Calu3 (cell line): ENCODE measurements at regions of chr15 and their contacts with region 1.

Region 1: DNA sequence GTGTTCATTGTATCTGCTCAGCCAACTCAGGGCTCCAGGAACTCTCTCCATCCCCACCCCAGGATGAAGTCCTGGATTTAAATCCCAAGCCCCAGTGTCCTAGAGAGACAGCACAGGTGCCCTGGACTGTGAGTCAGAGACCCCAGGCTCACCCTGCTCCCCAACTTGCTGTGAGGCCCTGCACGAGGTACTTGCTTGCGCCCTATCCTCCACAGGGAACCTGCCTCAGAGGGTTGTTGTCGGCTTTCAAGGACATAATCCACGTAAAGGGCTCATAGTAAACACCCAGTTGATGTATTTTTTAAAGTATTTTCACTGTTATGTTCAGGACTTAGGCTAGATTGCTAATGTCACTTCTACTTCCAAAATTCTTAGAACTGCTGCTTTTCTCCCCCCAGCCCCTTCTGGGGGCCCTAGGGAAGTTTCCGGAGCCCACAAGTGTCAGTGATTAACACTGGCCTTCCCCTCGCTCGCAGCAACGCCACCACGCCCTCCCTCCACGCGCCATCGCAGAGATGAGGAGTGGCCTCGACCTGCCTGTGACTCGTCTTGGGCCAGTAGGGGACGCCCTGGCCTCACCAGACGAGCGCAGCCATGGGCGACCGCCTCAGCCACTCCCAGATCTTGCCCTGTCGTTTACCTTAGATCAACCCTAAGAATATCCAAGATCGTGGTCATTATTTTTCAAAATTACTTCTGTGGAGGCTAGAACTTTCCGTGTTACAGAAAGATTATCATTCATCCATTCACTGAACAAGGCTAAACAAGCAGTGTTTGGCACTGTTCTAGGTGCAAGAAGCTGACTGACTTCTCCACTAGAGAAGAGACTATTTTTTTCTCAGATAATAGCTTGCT is 6.0 kb upstream of the SRP14 start:
- DNase-seq: peak; percentile 82
- H3K4me3 Mint-ChIP-seq: no peak overlapping the region
- H3K27ac Mint-ChIP-seq: no peak overlapping the region
- H3K4me1 Mint-ChIP-seq: peaks cover 10% of the 10 kb centered on the region
- H3K27me3 Mint-ChIP-seq: no peaks in the 10 kb centered on the region
- CTCF ChIP-seq: no peak

Region 2: GRCh38 chr15:40160689-40161688 is 116.0 kb after region 1 on chr15 and contains the start of gene BUB1B:
- CTCF ChIA-PET with region 1: no interaction called
- intact Hi-C with region 1: loop called (anchors 5 kb)
- DNase-seq: peak; percentile 86
- H3K4me3 Mint-ChIP-seq: no peak within 1 kb of the TSS
- H3K27ac Mint-ChIP-seq: no peak within 1 kb of the TSS
- H3K4me1 Mint-ChIP-seq: peaks cover 2% of the 10 kb centered on the region
- H3K27me3 Mint-ChIP-seq: no peaks in the 10 kb centered on the region
- CTCF ChIP-seq: no peak
- total RNA-seq, gene BUB1B: 39.0 and 41.8 TPM in 2 replicates